ENCODE measurements at regions of chr11 and their contacts with region 1.

Region 1: GRCh38 chr11:14672635-14673034 is 29.0 kb downstream of the PDE3B start:
- DNase-seq: no peak
- H3K4me3 ChIP-seq: no peak overlapping the region
- H3K27ac ChIP-seq: peak overlapping the region; percentile 8 to 24 (median 22)
- H3K4me1 ChIP-seq: peaks cover 0 to 29% (median 7%) of the 10 kb centered on the region in 4 donors
- H3K27me3 ChIP-seq: no peaks in the 10 kb centered on the region
- CTCF ChIP-seq: no peak
- EP300 ChIP-seq: no peak
- POLR2A ChIP-seq: no peak

Region 2: DNA sequence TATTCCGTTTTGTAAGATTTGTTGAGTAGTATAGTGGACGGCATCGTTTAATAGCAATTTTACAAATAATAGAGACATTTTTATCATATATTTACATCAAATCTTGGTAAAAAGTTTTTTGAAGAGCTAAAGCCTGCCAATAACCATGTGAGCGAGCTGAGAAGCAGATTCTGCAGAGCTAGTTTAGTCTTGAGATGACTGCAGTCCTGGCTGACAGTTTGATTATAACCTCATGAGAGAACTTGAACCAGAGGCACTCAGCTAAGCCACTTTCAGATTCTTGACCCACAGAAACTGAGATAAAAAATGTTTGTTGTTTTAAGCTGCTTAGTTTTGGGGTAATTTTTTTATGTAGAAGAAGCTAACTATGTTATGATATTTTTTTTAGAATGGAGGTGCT is 49.9 kb after region 1 on chr11:
- in situ Hi-C with region 1: no loop called
- intact Hi-C with region 1: loop called (anchors 5 kb)
- DNase-seq: no peak
- H3K4me3 ChIP-seq: no peak overlapping the region
- H3K27ac ChIP-seq: peak overlapping the region in 1 of 4 donors; percentile 7
- H3K4me1 ChIP-seq: peaks cover 0 to 2% (median 0%) of the 10 kb centered on the region in 4 donors
- H3K27me3 ChIP-seq: no peaks in the 10 kb centered on the region
- CTCF ChIP-seq: no peak
- EP300 ChIP-seq: no peak
- POLR2A ChIP-seq: no peak

Measured in transverse colon (tissue), 4 donors.